Activated CD8-positive, alpha-beta T cell treated with anti-CD3 and anti-CD28 coated beads for 36 hours (primary cell): ENCODE measurements at regions of chr3 and their contacts with region 1.

Region 1: GRCh38 chr3:36868614-36869436 is 76.0 kb downstream of the TRANK1 start:
- DNase-seq: peak; percentile 63
- ATAC-seq: peak; percentile 85
- H3K4me3 Mint-ChIP-seq: no peak overlapping the region
- H3K27ac Mint-ChIP-seq: no peak overlapping the region
- H3K4me1 Mint-ChIP-seq: peaks cover 13% of the 10 kb centered on the region
- H3K27me3 Mint-ChIP-seq: no peaks in the 10 kb centered on the region
- CTCF ChIP-seq: peak; percentile 81

Region 2: GRCh38 chr3:36729204-36730056 is 139.4 kb before region 1 on chr3:
- CTCF ChIA-PET with region 1: interaction called, 29 read pairs
- POLR2A ChIA-PET with region 1: no interaction called
- intact Hi-C with region 1: loop called (anchors 1 kb)
- DNase-seq: no peak
- ATAC-seq: peak; percentile 60
- H3K4me3 Mint-ChIP-seq: no peak overlapping the region
- H3K27ac Mint-ChIP-seq: no peak overlapping the region
- H3K4me1 Mint-ChIP-seq: no peaks in the 10 kb centered on the region
- H3K27me3 Mint-ChIP-seq: no peaks in the 10 kb centered on the region
- CTCF ChIP-seq: peak; percentile 72

Region 3: GRCh38 chr3:36792342-36792741 is 76.5 kb before region 1 on chr3:
- CTCF ChIA-PET with region 1: interaction called, 18 read pairs
- POLR2A ChIA-PET with region 1: no interaction called
- intact Hi-C with region 1: no loop called
- DNase-seq: peak; percentile 34
- ATAC-seq: peak; percentile 42
- H3K4me3 Mint-ChIP-seq: no peak overlapping the region
- H3K27ac Mint-ChIP-seq: no peak overlapping the region
- H3K4me1 Mint-ChIP-seq: no peaks in the 10 kb centered on the region
- H3K27me3 Mint-ChIP-seq: no peaks in the 10 kb centered on the region
- CTCF ChIP-seq: no peak

Region 4: GRCh38 chr3:36852071-36852470 is 16.8 kb before region 1 on chr3:
- CTCF ChIA-PET with region 1: interaction called, 43 read pairs
- POLR2A ChIA-PET with region 1: interaction called, 4 read pairs
- intact Hi-C with region 1: no loop called
- DNase-seq: no peak
- ATAC-seq: no peak
- H3K4me3 Mint-ChIP-seq: no peak overlapping the region
- H3K27ac Mint-ChIP-seq: no peak overlapping the region
- H3K4me1 Mint-ChIP-seq: no peaks in the 10 kb centered on the region
- H3K27me3 Mint-ChIP-seq: no peaks in the 10 kb centered on the region
- CTCF ChIP-seq: no peak

Region 5: DNA sequence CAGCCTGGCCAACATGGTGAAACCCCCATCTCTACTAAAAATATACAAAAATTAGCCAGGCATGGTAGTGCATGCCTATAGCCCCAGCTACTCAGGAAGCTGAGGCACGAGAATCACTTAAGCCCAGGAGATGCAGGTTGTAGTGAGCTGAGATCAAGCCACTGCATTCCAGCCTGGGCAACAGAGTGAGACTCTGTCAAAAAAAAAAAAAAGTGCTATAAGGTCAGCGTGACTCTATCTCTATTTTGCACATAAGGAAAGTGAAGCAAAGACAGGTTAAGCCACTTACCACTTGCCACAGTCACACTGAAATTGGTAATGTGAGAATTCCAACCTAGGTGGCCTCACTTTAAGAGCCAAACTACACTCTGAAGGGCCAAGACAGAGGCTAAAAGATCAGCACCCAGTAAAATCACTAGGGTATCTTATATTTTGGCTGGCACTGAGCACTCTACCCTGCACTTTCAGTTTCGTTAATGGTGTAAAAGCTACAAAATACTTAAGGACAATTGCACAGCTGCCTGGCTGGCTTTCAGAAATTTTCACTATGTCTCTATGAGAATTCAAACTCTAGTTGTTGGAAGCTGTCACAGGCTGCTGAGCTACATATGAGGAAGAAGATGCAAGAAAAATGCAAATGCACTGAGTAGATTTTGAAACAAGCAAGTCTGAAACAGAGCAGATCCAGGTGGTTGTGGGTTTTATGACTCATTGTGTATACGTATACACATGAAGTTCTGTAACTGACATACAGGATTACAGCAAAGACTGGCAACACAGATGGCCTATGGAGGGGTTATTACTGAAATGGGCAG is 43.4 kb after region 1 on chr3:
- CTCF ChIA-PET with region 1: interaction called, 12 read pairs
- POLR2A ChIA-PET with region 1: no interaction called
- intact Hi-C with region 1: no loop called
- DNase-seq: peak; percentile 58
- ATAC-seq: peak; percentile 78
- H3K4me3 Mint-ChIP-seq: peak overlapping the region; percentile 62
- H3K27ac Mint-ChIP-seq: peak overlapping the region; percentile 89
- H3K4me1 Mint-ChIP-seq: peaks cover 34% of the 10 kb centered on the region
- H3K27me3 Mint-ChIP-seq: no peaks in the 10 kb centered on the region
- CTCF ChIP-seq: no peak

Region 6: GRCh38 chr3:37197810-37198371 is 329.1 kb after region 1 on chr3:
- CTCF ChIA-PET with region 1: no interaction called
- POLR2A ChIA-PET with region 1: no interaction called
- intact Hi-C with region 1: no loop called
- DNase-seq: no peak
- ATAC-seq: no peak
- H3K4me3 Mint-ChIP-seq: no peak overlapping the region
- H3K27ac Mint-ChIP-seq: no peak overlapping the region
- H3K4me1 Mint-ChIP-seq: no peaks in the 10 kb centered on the region
- H3K27me3 Mint-ChIP-seq: peaks cover 2% of the 10 kb centered on the region
- CTCF ChIP-seq: no peak